ENCODE measurements at regions of chr10 and their contacts with region 1.

Region 1: GRCh38 chr10:84333864-84334451 is 5.6 kb downstream of the CCSER2 start:
- DNase-seq: peak in 34 of 35 experiments; percentile 52 to 92 (median 76)
- ATAC-seq: peak; percentile 81 to 85 (median 84)
- H3K4me3 ChIP-seq: peak overlapping the region in 1 of 2 donors; percentile 1
- H3K4me3 Mint-ChIP-seq: peak overlapping the region; percentile 4 to 52 (median 31)
- H3K27ac ChIP-seq: peak overlapping the region; percentile 90
- H3K27ac Mint-ChIP-seq: peak overlapping the region; percentile 85 to 87
- H3K4me1 ChIP-seq: peaks cover 38 to 46% of the 10 kb centered on the region in 2 experiments
- H3K4me1 Mint-ChIP-seq: peaks cover 22 to 59% (median 48%) of the 10 kb centered on the region in 3 donors
- H3K27me3 ChIP-seq: no peaks in the 10 kb centered on the region
- H3K27me3 Mint-ChIP-seq: no peaks in the 10 kb centered on the region

Region 2: DNA sequence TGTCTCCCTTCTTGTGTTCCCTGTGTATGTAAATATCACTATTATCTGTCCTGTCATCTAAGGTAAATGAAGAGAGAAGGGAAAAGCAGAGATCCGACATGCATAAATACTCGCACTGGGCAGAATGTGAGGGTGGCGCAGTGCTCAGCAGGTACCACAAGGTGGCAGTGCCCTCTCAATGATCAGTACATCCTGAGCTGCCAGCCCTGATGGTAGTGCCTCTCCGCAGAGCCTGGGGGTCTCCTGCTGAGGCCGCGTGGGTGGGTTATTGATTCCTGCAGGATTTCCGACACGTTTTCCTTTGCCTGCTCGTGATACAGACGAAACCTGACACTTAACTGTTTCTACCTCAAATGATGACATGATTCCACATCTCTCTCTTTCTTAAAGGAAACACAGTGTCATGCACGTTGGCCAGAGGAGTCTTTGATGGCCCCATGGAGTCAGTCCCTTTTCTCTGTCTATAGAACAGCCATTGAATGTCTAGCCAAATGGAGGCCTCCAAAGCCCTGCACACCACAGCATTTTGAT is 69.3 kb before region 1 on chr10:
- CTCF ChIA-PET with region 1: interaction called, 6 to 13 read pairs
- POLR2A ChIA-PET with region 1: interaction called, 3 to 4 read pairs
- DNase-seq: peak; percentile 31 to 83 (median 66)
- ATAC-seq: peak; percentile 88 to 98 (median 92)
- H3K4me3 ChIP-seq: no peak overlapping the region
- H3K4me3 Mint-ChIP-seq: no peak overlapping the region
- H3K27ac ChIP-seq: no peak overlapping the region
- H3K27ac Mint-ChIP-seq: no peak overlapping the region
- H3K4me1 ChIP-seq: peaks cover 0 to 7% of the 10 kb centered on the region in 2 experiments
- H3K4me1 Mint-ChIP-seq: peaks cover 5 to 11% (median 7%) of the 10 kb centered on the region in 3 donors
- H3K27me3 ChIP-seq: peaks cover 0 to 33% of the 10 kb centered on the region in 2 experiments
- H3K27me3 Mint-ChIP-seq: peaks cover 24 to 30% of the 10 kb centered on the region in 2 donors

Region 3: GRCh38 chr10:84344526-84344925 is 10.6 kb after region 1 on chr10:
- CTCF ChIA-PET with region 1: interaction called in 1 of 2 experiments, 20 read pairs
- POLR2A ChIA-PET with region 1: interaction called in 1 of 2 experiments, 4 read pairs
- DNase-seq: peak in 1 of 35 experiments; percentile 43
- ATAC-seq: peak in 2 of 4 experiments; percentile 45 to 66
- H3K4me3 ChIP-seq: no peak overlapping the region
- H3K4me3 Mint-ChIP-seq: peak overlapping the region in 2 of 3 donors; percentile 1 to 12
- H3K27ac ChIP-seq: no peak overlapping the region
- H3K27ac Mint-ChIP-seq: peak overlapping the region; percentile 6 to 24
- H3K4me1 ChIP-seq: peaks cover 12 to 26% of the 10 kb centered on the region in 2 experiments
- H3K4me1 Mint-ChIP-seq: peaks cover 57 to 71% (median 67%) of the 10 kb centered on the region in 3 donors
- H3K27me3 ChIP-seq: no peaks in the 10 kb centered on the region
- H3K27me3 Mint-ChIP-seq: no peaks in the 10 kb centered on the region

Region 4: DNA sequence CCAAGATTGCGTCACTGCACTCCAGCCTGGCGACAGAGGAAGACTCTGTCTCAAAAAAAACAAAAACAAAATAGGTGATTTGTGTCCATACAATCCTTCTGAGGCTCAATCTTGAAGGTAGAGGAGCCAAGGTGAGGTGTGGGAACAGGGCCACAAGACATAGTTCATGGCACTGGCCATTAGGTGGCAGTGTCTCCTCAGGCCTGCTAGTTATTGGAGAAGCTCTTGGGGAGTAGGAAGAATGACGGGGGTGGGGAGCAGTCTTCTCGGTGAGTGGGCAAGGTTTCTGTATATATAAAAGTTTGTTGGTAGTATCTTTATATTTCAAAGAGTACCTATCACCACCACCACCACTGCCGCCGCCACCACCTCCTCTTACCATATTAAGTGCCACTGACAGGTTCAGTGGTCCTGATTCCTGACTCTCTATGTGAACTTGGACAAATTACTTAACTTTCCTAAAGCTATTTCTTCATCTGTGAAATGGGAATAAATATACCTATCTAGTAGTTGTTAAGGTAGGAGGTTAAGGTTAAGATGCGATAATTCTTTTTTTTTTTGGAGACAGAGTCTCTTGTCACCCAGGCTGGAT is 18.4 kb after region 1 on chr10:
- CTCF ChIA-PET with region 1: interaction called, 6 to 20 read pairs
- POLR2A ChIA-PET with region 1: interaction called in 1 of 2 experiments, 8 read pairs
- DNase-seq: peak; percentile 34 to 83 (median 66)
- ATAC-seq: peak; percentile 84 to 92 (median 87)
- H3K4me3 ChIP-seq: no peak overlapping the region
- H3K4me3 Mint-ChIP-seq: no peak overlapping the region
- H3K27ac ChIP-seq: no peak overlapping the region
- H3K27ac Mint-ChIP-seq: no peak overlapping the region
- H3K4me1 ChIP-seq: peaks cover 11 to 31% of the 10 kb centered on the region in 2 experiments
- H3K4me1 Mint-ChIP-seq: peaks cover 71 to 82% (median 78%) of the 10 kb centered on the region in 3 donors
- H3K27me3 ChIP-seq: no peaks in the 10 kb centered on the region
- H3K27me3 Mint-ChIP-seq: no peaks in the 10 kb centered on the region

Region 5: GRCh38 chr10:84360637-84361365 is 26.8 kb after region 1 on chr10:
- CTCF ChIA-PET with region 1: interaction called, 4 to 5 read pairs
- POLR2A ChIA-PET with region 1: interaction called in 1 of 2 experiments, 14 read pairs
- DNase-seq: peak in 1 of 35 experiments; percentile 13
- ATAC-seq: no peak
- H3K4me3 ChIP-seq: no peak overlapping the region
- H3K4me3 Mint-ChIP-seq: peak overlapping the region; percentile 5 to 35 (median 5)
- H3K27ac ChIP-seq: no peak overlapping the region
- H3K27ac Mint-ChIP-seq: peak overlapping the region in 1 of 2 donors; percentile 34
- H3K4me1 ChIP-seq: peaks cover 21 to 27% of the 10 kb centered on the region in 2 experiments
- H3K4me1 Mint-ChIP-seq: peaks cover 76 to 87% (median 79%) of the 10 kb centered on the region in 3 donors
- H3K27me3 ChIP-seq: no peaks in the 10 kb centered on the region
- H3K27me3 Mint-ChIP-seq: no peaks in the 10 kb centered on the region